ENCODE measurements at regions of chr18 and their contacts with region 1.

Region 1: DNA sequence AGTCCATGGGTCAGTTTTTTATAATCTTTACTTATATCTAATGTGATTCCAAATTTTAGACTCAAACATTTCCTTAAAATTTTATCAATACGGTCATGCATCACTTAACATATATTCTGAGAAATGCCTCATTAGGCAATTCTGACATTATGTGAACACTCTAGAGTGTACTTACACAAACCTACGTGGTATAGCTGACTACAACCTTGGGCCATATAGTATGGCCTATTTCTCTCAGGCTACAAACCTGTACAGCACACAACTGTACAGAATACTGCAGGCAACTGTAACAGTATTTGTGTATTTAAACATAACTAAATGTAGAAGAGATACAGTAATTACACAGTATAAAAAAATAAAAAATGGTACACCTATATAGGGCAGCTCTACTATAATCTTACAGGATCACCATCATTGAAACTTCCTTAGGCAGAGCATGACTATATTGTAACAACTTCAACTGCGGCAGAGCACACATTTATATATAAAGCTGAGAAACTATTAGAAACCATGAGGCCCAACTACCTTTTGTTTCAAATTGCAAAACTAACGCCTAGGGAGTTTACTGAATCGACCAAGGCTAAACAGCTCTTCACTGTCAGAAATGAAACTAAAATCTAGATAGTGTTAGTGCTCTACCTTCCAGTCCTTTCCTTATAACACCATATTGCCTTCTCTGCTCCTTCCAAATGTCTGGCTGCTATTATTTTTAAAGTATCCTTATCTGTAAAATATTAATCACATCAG is 6.9 kb downstream of the YES1 start:
- DNase-seq: no peak
- H3K4me3 Mint-ChIP-seq: peak overlapping the region; percentile 56
- H3K27ac Mint-ChIP-seq: peak overlapping the region; percentile 91
- H3K4me1 Mint-ChIP-seq: peaks cover 37% of the 10 kb centered on the region
- H3K27me3 Mint-ChIP-seq: no peaks in the 10 kb centered on the region
- CTCF ChIP-seq: no peak

Region 2: GRCh38 chr18:666177-666576 is 139.0 kb before region 1 on chr18:
- CTCF ChIA-PET with region 1: no interaction called
- intact Hi-C with region 1: no loop called
- DNase-seq: no peak
- H3K4me3 Mint-ChIP-seq: no peak overlapping the region
- H3K27ac Mint-ChIP-seq: peak overlapping the region; percentile 89
- H3K4me1 Mint-ChIP-seq: peaks cover 16% of the 10 kb centered on the region
- H3K27me3 Mint-ChIP-seq: no peaks in the 10 kb centered on the region
- CTCF ChIP-seq: no peak

Region 3: DNA sequence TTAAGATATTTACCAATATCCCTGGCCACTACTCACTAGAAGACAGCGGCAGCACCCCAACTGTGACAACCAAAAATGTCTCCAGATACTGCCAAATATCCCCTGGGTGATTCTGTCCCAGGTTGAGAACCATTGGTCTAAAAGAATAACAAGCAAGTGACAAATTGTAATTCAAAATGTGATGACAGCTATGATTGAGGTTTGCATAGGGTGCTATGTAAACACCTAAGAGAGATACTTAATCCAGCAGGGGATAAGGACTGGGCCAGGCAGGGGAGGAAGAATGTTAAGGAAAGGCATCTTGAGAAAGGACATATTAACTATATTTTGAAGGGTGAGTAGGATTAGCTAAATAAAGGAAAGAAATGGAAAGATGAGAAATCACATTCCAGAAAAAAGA is 54.7 kb before region 1 on chr18:
- CTCF ChIA-PET with region 1: no interaction called
- intact Hi-C with region 1: loop called (anchors 5 kb)
- DNase-seq: no peak
- H3K4me3 Mint-ChIP-seq: no peak overlapping the region
- H3K27ac Mint-ChIP-seq: no peak overlapping the region
- H3K4me1 Mint-ChIP-seq: peaks cover 6% of the 10 kb centered on the region
- H3K27me3 Mint-ChIP-seq: no peaks in the 10 kb centered on the region
- CTCF ChIP-seq: no peak

Region 4: DNA sequence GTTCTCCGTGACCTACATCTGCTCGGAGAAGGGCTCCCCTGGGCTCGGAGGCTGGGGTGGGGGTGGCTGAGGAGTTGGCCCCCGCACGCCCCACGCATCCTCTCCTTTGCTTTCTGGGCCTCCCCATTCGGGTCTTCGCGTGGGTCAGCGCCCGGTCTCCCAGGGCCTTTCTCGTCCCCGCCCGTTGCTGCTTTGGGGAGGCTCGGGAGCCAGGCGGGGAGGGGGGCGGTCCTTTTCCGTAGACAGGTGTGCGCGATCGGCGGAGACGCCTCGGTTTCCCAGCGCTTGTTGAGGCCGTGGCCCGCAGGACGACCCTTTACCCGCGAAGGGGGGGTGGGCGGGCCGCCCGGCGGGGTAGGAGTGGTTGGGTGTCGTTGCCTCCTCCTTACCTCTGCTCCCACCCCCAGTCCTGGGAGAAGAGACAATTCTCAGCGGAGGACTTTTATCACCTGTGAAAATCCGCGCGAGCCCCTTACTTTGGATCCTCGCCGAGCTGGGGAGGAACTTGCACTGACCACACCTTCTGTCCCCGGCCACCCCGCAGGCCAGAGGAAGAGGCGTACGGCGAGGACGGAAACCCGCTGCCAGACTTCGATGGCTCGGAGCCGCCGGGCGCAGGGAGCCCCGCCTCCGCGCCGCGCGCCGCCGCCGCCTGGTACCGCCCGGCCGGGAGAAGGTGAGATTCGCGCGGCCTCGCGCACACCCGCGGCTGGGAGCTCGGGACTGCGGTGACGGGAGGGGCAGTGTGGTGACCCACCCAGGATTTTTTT is 102.1 kb after region 1 on chr18:
- CTCF ChIA-PET with region 1: no interaction called
- intact Hi-C with region 1: no loop called
- DNase-seq: no peak
- H3K4me3 Mint-ChIP-seq: no peak overlapping the region
- H3K27ac Mint-ChIP-seq: no peak overlapping the region
- H3K4me1 Mint-ChIP-seq: no peaks in the 10 kb centered on the region
- H3K27me3 Mint-ChIP-seq: peaks cover 55% of the 10 kb centered on the region
- CTCF ChIP-seq: no peak

Region 5: GRCh38 chr18:984004-984403 is 178.8 kb after region 1 on chr18:
- CTCF ChIA-PET with region 1: no interaction called
- intact Hi-C with region 1: no loop called
- DNase-seq: no peak
- H3K4me3 Mint-ChIP-seq: no peak overlapping the region
- H3K27ac Mint-ChIP-seq: no peak overlapping the region
- H3K4me1 Mint-ChIP-seq: no peaks in the 10 kb centered on the region
- H3K27me3 Mint-ChIP-seq: peaks cover 3% of the 10 kb centered on the region
- CTCF ChIP-seq: no peak

Region 6: DNA sequence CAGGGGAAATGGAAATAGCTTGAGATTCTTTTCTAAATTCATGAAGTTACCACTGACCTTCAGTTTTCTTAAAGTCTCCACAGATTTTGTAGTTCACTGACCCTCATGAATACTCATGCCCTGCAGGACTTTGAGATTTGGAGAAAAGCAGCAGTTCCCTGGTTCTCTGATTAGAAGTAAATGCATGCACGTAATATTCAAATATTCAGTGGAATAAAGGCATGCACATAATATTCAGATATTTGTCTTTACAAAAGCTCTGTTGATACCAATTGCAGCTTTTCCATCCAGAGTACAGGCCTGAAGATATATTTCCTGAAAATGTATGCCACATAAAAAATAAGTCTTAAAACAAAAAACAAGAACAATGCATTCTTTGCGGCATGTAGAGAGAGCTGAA is 319.3 kb after region 1 on chr18:
- CTCF ChIA-PET with region 1: no interaction called
- intact Hi-C with region 1: no loop called
- DNase-seq: no peak
- H3K4me3 Mint-ChIP-seq: no peak overlapping the region
- H3K27ac Mint-ChIP-seq: no peak overlapping the region
- H3K4me1 Mint-ChIP-seq: no peaks in the 10 kb centered on the region
- H3K27me3 Mint-ChIP-seq: peaks cover 11% of the 10 kb centered on the region
- CTCF ChIP-seq: no peak